Activated CD4-positive, alpha-beta memory T cell treated with anti-CD3 and anti-CD28 coated beads for 36 hours (primary cell): ENCODE measurements at regions of chr2 and their contacts with region 1.

Region 1: DNA sequence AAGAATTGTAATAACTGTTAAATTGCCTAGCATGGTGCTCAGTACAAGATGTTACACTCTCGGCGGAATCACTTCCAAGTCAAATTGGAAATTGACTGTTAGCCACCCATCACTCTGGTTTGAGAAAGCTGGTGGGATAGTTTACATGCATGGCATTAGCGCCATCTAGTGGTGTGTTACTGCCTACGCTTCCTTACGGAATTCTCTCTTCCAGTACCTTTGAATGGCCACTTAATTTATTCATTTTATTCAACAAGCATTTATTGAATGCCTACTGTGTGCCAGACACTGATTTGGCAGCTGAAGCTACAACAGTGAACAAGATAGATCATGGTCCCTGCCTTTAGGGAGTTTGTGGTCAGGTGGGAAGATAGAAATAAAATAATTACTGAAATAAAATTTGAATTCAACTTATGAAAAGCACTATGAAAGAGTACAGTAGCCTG is 171.2 kb downstream of the TMEM247 start:
- DNase-seq: peak; percentile 72
- H3K4me3 Mint-ChIP-seq: no peak overlapping the region
- H3K27ac Mint-ChIP-seq: no peak overlapping the region
- H3K4me1 Mint-ChIP-seq: no peaks in the 10 kb centered on the region
- H3K27me3 Mint-ChIP-seq: no peaks in the 10 kb centered on the region

Region 2: DNA sequence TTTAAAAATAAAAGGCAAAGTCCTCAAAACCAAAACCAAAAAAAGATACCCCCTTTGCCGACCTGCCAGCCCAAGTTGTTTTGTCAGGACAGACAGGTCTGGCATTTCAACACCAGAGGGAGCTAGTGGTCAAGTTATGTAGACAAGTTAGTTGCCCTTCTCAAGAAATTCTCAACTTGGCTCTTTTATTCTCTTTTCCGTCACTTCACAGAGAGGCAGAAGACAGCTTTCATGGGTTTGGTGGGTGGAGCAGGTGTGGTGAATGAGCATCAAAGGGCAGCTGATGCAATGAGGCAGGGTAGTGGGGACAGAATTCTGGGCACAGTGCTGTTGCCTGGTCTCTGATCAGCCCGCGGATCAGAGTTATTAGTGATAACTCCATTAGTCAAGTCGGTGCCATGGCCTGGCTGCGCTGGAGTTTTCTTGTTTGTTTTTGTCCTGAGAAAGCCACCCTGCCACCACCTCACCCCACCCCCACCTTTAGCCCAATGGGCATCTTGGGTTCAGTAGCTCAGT is 657.0 kb before region 1 on chr2:
- CTCF ChIA-PET with region 1: interaction called, 6 read pairs
- POLR2A ChIA-PET with region 1: no interaction called
- intact Hi-C with region 1: loop called (anchors 10 kb)
- DNase-seq: peak; percentile 66
- H3K4me3 Mint-ChIP-seq: no peak overlapping the region
- H3K27ac Mint-ChIP-seq: no peak overlapping the region
- H3K4me1 Mint-ChIP-seq: peaks cover 5% of the 10 kb centered on the region
- H3K27me3 Mint-ChIP-seq: no peaks in the 10 kb centered on the region

Region 3: DNA sequence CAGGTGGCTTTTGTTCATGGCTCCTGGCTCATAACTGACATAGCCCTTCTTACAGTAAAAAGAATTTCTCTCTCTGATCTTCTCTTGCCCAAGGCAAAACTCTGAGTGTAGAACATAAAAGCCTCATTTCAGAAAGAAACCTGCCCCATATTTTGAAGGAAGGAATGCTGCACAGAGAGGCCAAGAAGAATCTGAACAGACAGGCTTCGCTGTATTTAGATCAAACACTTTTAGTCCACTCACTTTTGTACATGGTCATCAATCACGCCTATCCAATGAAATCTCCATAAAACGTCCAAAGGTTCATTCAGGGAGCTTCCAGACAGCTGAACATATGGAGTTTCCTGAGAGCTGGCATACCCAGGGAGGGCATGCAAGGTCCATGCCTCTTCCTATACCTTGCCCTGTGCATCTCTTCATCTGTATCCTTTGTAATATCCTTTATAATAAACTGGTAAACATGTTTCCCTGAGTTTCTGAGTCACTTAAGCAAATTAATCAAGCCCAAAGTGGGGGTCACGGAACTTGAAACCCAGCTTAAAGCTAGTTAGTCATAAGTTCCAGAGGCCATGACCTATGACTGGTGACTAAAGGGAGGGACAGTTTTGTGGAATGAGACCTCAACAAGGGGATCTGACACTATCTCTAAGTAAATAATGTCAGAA is 233.7 kb before region 1 on chr2:
- CTCF ChIA-PET with region 1: no interaction called
- POLR2A ChIA-PET with region 1: no interaction called
- intact Hi-C with region 1: no loop called
- DNase-seq: no peak
- H3K4me3 Mint-ChIP-seq: no peak overlapping the region
- H3K27ac Mint-ChIP-seq: no peak overlapping the region
- H3K4me1 Mint-ChIP-seq: peaks cover 3% of the 10 kb centered on the region
- H3K27me3 Mint-ChIP-seq: peaks cover 4% of the 10 kb centered on the region

Region 4: GRCh38 chr2:46461011-46461674 is 189.4 kb before region 1 on chr2:
- CTCF ChIA-PET with region 1: interaction called, 15 read pairs
- POLR2A ChIA-PET with region 1: no interaction called
- intact Hi-C with region 1: no loop called
- DNase-seq: peak; percentile 85
- H3K4me3 Mint-ChIP-seq: no peak overlapping the region
- H3K27ac Mint-ChIP-seq: no peak overlapping the region
- H3K4me1 Mint-ChIP-seq: peaks cover 7% of the 10 kb centered on the region
- H3K27me3 Mint-ChIP-seq: no peaks in the 10 kb centered on the region

Region 5: GRCh38 chr2:46470114-46470628 is 180.4 kb before region 1 on chr2:
- CTCF ChIA-PET with region 1: interaction called, 19 read pairs
- POLR2A ChIA-PET with region 1: interaction called, 3 read pairs
- intact Hi-C with region 1: no loop called
- DNase-seq: no peak
- H3K4me3 Mint-ChIP-seq: no peak overlapping the region
- H3K27ac Mint-ChIP-seq: no peak overlapping the region
- H3K4me1 Mint-ChIP-seq: no peaks in the 10 kb centered on the region
- H3K27me3 Mint-ChIP-seq: no peaks in the 10 kb centered on the region

Region 6: DNA sequence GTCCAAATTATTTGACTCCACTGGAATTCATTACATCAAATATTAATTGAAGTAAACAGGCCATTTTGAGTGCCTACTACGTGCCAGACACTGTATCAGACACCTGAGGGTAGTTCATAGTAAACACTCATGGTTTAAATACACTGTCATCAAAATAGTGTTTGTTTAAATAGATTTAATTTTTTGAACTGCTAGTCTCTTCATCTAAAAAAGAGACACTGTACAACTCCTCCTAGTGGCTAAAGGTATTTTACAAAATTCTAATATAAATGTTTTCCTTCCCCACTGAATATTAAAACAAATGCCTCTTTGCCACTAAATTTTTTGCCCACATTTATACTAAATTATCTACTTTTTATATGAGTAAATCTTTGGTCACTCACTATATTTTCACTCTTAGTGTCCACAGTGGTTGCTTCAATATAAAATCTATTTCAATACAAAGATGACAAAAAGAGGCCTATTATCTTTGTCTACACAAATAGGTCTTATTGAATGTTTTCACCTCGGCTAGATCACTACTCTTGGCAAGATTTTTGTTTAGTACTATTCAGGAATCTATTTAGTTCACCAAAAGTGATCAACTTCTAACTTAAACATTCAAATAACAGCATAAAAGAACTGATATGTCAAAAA is 49.1 kb before region 1 on chr2:
- CTCF ChIA-PET with region 1: interaction called, 11 read pairs
- POLR2A ChIA-PET with region 1: no interaction called
- intact Hi-C with region 1: no loop called
- DNase-seq: no peak
- H3K4me3 Mint-ChIP-seq: no peak overlapping the region
- H3K27ac Mint-ChIP-seq: no peak overlapping the region
- H3K4me1 Mint-ChIP-seq: no peaks in the 10 kb centered on the region
- H3K27me3 Mint-ChIP-seq: no peaks in the 10 kb centered on the region

Region 7: GRCh38 chr2:46632349-46632748 is 18.2 kb before region 1 on chr2:
- CTCF ChIA-PET with region 1: interaction called, 13 read pairs
- POLR2A ChIA-PET with region 1: no interaction called
- intact Hi-C with region 1: loop called (anchors 1 kb)
- DNase-seq: no peak
- H3K4me3 Mint-ChIP-seq: no peak overlapping the region
- H3K27ac Mint-ChIP-seq: no peak overlapping the region
- H3K4me1 Mint-ChIP-seq: peaks cover 7% of the 10 kb centered on the region
- H3K27me3 Mint-ChIP-seq: no peaks in the 10 kb centered on the region

Region 8: DNA sequence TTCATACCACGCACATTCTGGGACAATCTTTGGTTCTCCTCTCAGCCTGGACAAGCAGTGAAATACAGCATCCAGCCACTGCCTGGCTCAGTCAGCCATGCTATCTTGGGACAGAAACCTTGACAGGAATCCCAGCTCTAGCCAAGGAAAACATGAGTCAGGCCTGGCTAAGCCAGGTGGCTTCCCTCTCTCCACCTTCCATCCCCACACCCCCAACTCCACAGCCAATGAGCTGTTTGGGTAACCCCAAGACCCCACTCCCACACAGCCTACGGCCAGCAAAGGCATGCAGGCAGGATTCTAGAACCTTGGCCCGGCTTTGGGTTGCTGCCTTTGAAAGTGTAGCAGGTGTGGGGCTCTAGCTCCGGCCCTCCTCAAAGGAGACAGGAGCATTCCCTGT is 200.2 kb after region 1 on chr2:
- CTCF ChIA-PET with region 1: no interaction called
- POLR2A ChIA-PET with region 1: no interaction called
- intact Hi-C with region 1: no loop called
- DNase-seq: no peak
- H3K4me3 Mint-ChIP-seq: no peak overlapping the region
- H3K27ac Mint-ChIP-seq: no peak overlapping the region
- H3K4me1 Mint-ChIP-seq: no peaks in the 10 kb centered on the region
- H3K27me3 Mint-ChIP-seq: peaks cover 10% of the 10 kb centered on the region

Region 9: DNA sequence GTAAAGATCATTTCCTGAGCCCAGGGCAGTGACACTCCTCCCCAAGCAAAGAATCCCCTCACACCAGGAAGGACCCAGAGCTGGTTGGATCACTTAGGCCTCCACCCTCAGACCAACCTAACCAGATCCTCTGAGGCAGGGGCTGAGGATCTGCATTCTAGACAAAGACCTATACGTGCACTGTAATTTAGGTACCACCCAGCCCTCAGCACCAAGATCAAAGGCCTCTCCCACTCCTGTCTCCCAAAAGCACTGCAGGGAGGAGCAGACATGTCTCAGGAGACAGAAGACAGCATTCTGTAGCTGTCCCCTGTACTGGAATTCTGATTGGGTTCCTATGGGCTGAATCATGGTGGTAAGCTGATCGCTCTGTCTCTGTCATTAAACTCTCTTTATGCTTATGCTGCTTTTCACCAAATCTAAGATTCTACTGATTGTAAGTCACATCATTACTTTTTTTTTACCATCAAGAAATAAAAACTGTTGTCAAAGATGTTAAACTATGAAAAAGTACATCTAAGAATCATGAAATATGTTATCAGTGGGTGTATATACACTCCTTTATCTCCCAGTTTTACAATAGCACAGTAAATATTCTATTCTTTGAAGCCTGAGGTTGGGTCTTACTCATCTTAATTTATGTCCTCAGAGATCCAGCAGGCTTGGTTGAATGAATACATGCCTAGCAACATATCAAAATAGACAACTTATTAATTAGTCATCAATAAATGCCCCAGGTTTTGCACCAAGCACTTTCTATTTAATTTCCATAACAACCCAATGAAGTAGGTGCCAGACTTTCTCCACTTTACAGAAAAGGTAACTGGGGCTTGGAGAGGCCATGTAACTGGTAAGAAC is 236.7 kb after region 1 on chr2:
- CTCF ChIA-PET with region 1: interaction called, 10 read pairs
- POLR2A ChIA-PET with region 1: no interaction called
- intact Hi-C with region 1: no loop called
- DNase-seq: no peak
- H3K4me3 Mint-ChIP-seq: no peak overlapping the region
- H3K27ac Mint-ChIP-seq: peak overlapping the region; percentile 20
- H3K4me1 Mint-ChIP-seq: peaks cover 9% of the 10 kb centered on the region
- H3K27me3 Mint-ChIP-seq: peaks cover 12% of the 10 kb centered on the region